CD8-positive, alpha-beta T cell (primary cell): ENCODE measurements at regions of chr3 and their contacts with region 1.

Region 1: GRCh38 chr3:112489674-112490479 is 9.4 kb downstream of the BTLA start:
- DNase-seq: peak in 1 of 9 experiments; percentile 25
- ATAC-seq: no peak
- H3K4me3 ChIP-seq: no peak overlapping the region
- H3K4me3 Mint-ChIP-seq: peak overlapping the region; percentile 23
- H3K27ac ChIP-seq: no peak overlapping the region
- H3K27ac Mint-ChIP-seq: peak overlapping the region; percentile 78
- H3K4me1 ChIP-seq: peaks cover 40% of the 10 kb centered on the region
- H3K4me1 Mint-ChIP-seq: peaks cover 63% of the 10 kb centered on the region
- H3K27me3 ChIP-seq: no peaks in the 10 kb centered on the region
- H3K27me3 Mint-ChIP-seq: no peaks in the 10 kb centered on the region
- CTCF ChIP-seq: no peak

Region 2: DNA sequence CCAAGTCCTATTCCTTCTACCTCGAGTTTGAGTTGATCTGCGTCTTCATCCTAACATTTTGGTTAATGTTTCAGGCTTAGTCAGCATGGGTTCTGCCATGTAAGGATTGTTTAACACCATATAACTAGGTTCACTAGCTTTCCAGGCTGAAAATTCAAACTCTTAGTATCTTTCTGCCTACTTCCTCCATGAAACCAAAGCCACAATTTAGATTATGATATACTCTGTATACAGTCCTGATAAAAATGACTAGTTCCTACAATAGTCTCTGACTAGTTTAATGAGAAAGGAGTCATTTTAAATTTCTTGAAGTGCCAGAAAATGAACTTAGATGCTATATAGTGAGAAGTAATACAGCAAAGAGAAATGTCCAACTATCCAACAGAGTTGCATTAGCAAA is 16.0 kb after region 1 on chr3:
- CTCF ChIA-PET with region 1: interaction called, 3 read pairs
- POLR2A ChIA-PET with region 1: interaction called, 4 read pairs
- intact Hi-C with region 1: loop called in 1 of 2 experiments (anchors 2 kb)
- DNase-seq: no peak
- ATAC-seq: no peak
- H3K4me3 ChIP-seq: no peak overlapping the region
- H3K4me3 Mint-ChIP-seq: no peak overlapping the region
- H3K27ac ChIP-seq: no peak overlapping the region
- H3K27ac Mint-ChIP-seq: no peak overlapping the region
- H3K4me1 ChIP-seq: no peaks in the 10 kb centered on the region
- H3K4me1 Mint-ChIP-seq: peaks cover 9% of the 10 kb centered on the region
- H3K27me3 ChIP-seq: no peaks in the 10 kb centered on the region
- H3K27me3 Mint-ChIP-seq: no peaks in the 10 kb centered on the region
- CTCF ChIP-seq: no peak